ENCODE measurements at regions of chr12 and their contacts with region 1.

Region 1: DNA sequence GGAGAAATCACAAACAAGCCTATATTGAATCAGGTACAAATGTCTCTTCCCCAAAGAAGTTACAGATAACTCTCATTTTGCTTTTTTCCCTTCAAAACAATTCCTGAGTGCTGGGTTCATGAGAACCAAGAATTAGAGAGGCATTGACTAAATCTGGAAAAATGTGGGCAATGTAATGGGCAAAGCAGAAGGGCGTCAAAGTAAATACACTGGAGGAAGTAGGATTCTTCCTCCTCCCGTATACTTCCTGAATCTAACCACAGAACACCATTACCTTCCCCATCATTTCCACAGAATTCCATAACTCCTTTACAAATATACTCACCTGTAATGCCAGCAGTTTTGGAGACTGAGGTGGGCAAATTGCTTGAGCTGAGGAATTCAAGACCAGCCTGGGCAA is 3.0 kb upstream of the RBMS2 start:
- DNase-seq: peak; percentile 38
- ATAC-seq: no peak
- H3K4me3 ChIP-seq: no peak overlapping the region
- H3K27ac ChIP-seq: no peak overlapping the region
- H3K4me1 ChIP-seq: peaks cover 31% of the 10 kb centered on the region
- H3K27me3 ChIP-seq: no peaks in the 10 kb centered on the region; a peak in 1 of 5 replicates
- CTCF ChIP-seq: no peak
- EP300 ChIP-seq: no peak
- POLR2A ChIP-seq: no peak
- RAD21 ChIP-seq: no peak

Region 2: GRCh38 chr12:56321027-56321426 is 197.5 kb before region 1 on chr12:
- CTCF ChIA-PET with region 1: no interaction called
- POLR2A ChIA-PET with region 1: no interaction called
- in situ Hi-C with region 1: no loop called
- intact Hi-C with region 1: no loop called
- DNase-seq: no peak
- ATAC-seq: no peak
- H3K4me3 ChIP-seq: no peak overlapping the region
- H3K27ac ChIP-seq: no peak overlapping the region
- H3K4me1 ChIP-seq: peaks cover 25% of the 10 kb centered on the region
- H3K27me3 ChIP-seq: no peaks in the 10 kb centered on the region
- CTCF ChIP-seq: no peak
- EP300 ChIP-seq: no peak
- POLR2A ChIP-seq: no peak
- RAD21 ChIP-seq: no peak

Region 3: GRCh38 chr12:56571126-56571525 is 52.6 kb after region 1 on chr12:
- CTCF ChIA-PET with region 1: interaction called, 36 read pairs
- POLR2A ChIA-PET with region 1: no interaction called
- in situ Hi-C with region 1: loop called (anchors 10 kb)
- intact Hi-C with region 1: loop called (anchors 1 kb)
- DNase-seq: no peak
- ATAC-seq: no peak
- H3K4me3 ChIP-seq: no peak overlapping the region
- H3K27ac ChIP-seq: no peak overlapping the region
- H3K4me1 ChIP-seq: peaks cover 26% of the 10 kb centered on the region
- H3K27me3 ChIP-seq: no peaks in the 10 kb centered on the region
- CTCF ChIP-seq: no peak
- EP300 ChIP-seq: no peak
- POLR2A ChIP-seq: no peak
- RAD21 ChIP-seq: no peak

Region 4: DNA sequence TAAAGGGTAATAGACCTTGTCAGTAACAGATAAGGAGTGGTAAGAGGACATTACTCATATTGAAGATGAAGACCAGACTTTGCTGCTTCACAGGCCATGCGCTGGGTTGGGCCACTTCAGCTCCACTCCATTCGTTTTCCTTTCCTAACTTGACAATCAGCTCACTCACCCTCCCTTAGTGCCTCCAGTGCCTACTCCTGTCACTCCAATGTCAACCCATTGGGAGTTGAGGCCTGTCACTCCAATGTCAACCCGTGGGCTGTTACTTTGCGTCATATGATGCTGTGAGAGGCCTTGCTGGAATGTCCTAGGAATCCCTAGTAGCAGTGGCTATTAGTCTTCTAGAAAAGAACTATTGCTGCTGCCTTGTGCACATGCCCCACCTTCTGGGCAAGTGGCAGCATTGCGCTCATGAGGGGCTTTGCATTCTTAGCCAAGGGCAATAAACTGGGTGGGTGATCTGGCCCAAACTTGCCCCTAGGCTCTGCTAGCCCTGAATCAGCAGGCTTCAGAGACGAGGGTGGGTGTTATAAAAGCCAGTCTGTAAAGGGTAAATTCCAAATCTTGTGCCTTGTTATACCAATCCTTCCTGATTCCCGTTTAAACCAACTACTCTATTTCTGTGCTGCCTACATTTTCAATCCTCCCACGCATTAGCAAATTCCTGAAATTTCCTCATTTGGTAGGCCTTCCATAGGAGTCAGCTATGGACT is 75.5 kb after region 1 on chr12:
- CTCF ChIA-PET with region 1: interaction called, 30 read pairs
- POLR2A ChIA-PET with region 1: no interaction called
- in situ Hi-C with region 1: no loop called
- intact Hi-C with region 1: loop called (anchors 1 kb)
- DNase-seq: peak; percentile 35
- ATAC-seq: peak; percentile 77
- H3K4me3 ChIP-seq: no peak overlapping the region
- H3K27ac ChIP-seq: no peak overlapping the region
- H3K4me1 ChIP-seq: no peaks in the 10 kb centered on the region
- H3K27me3 ChIP-seq: no peaks in the 10 kb centered on the region
- CTCF ChIP-seq: peak; percentile 84
- EP300 ChIP-seq: no peak
- POLR2A ChIP-seq: no peak
- RAD21 ChIP-seq: peak; percentile 71

Measured in HepG2 (cell line).